ENCODE measurements at regions of chr1 and their contacts with region 1.

Region 1: GRCh38 chr1:201709564-201710295 is 119.2 kb upstream of the IPO9 start:
- DNase-seq: peak; percentile 65 to 78 (median 72)
- ATAC-seq: peak; percentile 49
- H3K4me3 ChIP-seq: no peak overlapping the region
- H3K27ac ChIP-seq: no peak overlapping the region
- H3K4me1 ChIP-seq: peaks cover 27% of the 10 kb centered on the region
- H3K27me3 ChIP-seq: no peaks in the 10 kb centered on the region
- CTCF ChIP-seq: peak; percentile 73 to 89 (median 81)
- POLR2A ChIP-seq: no peak

Region 2: GRCh38 chr1:201792534-201793305 is 83.0 kb after region 1 on chr1:
- intact Hi-C with region 1: loop called (anchors 2 kb)
- DNase-seq: peak; percentile 79 to 84 (median 83)
- ATAC-seq: peak; percentile 93
- H3K4me3 ChIP-seq: no peak overlapping the region
- H3K27ac ChIP-seq: peak overlapping the region in 1 of 4 donors; percentile 18
- H3K4me1 ChIP-seq: peaks cover 8% of the 10 kb centered on the region
- H3K27me3 ChIP-seq: no peaks in the 10 kb centered on the region
- CTCF ChIP-seq: peak; percentile 86 to 98 (median 96)
- POLR2A ChIP-seq: no peak